Activated CD4-positive, alpha-beta memory T cell treated with anti-CD3 and anti-CD28 coated beads for 36 hours (primary cell): ENCODE measurements at regions of chr11 and their contacts with region 1.

Region 1: GRCh38 chr11:95790123-95790932 is at the start of gene CEP57:
- DNase-seq: peak; percentile 97
- H3K4me3 Mint-ChIP-seq: peak within 1 kb of the TSS; percentile 95
- H3K27ac Mint-ChIP-seq: peak within 1 kb of the TSS; percentile 100
- H3K4me1 Mint-ChIP-seq: peaks cover 55% of the 10 kb centered on the region
- H3K27me3 Mint-ChIP-seq: no peaks in the 10 kb centered on the region
- total RNA-seq, gene CEP57: 115 to 117 TPM

Region 2: DNA sequence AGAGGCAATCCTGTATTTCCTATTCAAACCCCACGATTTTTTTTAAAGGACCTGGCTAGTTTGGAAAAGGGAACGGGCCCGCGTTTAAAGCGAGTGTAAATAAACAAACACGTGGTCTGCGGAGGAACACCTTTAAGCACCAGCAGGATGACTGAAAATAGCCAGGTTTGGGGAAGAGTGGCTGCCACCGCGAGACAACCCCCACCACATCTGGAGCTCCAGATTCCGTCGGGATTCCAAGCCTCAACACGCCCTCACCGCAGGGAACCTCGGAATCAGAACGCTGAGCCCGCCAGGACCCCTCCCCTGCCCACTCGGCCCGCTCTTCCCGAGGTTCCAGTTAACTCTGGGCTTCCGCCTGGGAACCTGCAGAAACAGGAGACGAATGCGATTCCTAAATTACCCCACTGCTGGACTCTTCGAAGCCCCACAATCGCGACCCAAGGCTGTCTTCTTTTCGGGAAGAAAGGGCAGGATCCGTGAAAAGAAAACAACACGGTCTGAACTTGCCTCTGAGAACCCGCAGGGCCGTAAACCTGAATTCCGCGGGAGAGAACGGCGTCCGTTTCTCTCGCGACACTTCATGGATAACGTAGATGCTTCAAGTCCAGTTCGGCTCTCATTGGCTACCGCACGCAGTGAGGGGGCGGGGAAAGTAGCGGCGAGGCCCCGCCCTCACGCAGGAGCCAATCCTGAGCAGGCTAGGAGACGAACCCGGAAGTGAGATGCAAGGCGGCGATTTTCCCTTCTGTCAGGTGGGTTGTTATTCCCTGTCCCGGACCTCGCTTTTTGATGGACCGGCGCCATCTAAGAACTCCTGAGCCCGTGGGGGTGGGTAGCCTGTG is 1296.8 kb before region 1 on chr11 and contains the starts of genes ANKRD49 and MRE11:
- CTCF ChIA-PET with region 1: no interaction called
- POLR2A ChIA-PET with region 1: no interaction called
- intact Hi-C with region 1: loop called (anchors 5 kb)
- DNase-seq: peak; percentile 98
- H3K4me3 Mint-ChIP-seq: peak within 1 kb of the TSS; percentile 96
- H3K27ac Mint-ChIP-seq: peak within 1 kb of the TSS; percentile 89
- H3K4me1 Mint-ChIP-seq: peaks cover 34% of the 10 kb centered on the region
- H3K27me3 Mint-ChIP-seq: no peaks in the 10 kb centered on the region
- total RNA-seq, gene ANKRD49: 18.6 to 19.2 TPM
- total RNA-seq, gene MRE11: 43.4 to 47.6 TPM

Region 3: DNA sequence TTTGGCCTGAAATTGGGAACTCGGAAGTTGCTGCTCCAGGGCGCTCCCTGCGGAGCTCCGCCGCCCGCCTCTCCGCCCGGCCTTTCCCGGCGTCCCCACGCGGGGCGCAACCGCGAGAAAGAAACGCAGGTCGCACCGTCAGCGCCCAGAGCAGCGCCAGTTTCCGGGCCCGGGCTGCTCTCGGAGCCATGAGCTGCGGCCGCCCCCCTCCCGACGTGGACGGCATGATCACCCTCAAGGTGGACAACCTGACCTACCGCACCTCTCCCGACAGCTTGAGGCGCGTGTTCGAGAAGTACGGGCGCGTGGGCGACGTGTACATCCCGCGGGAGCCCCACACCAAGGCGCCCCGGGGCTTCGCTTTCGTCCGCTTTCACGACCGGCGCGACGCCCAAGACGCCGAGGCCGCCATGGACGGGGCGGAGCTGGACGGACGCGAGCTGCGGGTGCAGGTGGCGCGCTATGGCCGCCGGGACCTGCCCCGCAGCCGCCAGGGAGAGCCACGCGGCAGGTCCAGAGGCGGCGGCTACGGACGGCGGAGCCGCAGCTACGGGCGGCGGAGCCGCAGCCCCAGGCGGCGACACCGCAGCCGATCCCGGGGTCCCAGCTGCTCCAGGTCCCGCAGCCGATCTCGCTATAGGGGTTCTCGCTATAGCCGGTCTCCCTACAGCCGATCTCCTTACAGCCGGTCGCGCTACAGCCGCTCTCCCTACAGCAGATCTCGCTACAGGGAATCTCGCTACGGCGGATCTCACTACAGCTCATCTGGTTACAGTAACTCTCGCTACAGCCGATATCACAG is 723.1 kb before region 1 on chr11:
- CTCF ChIA-PET with region 1: interaction called, 5 read pairs
- POLR2A ChIA-PET with region 1: interaction called, 18 read pairs
- intact Hi-C with region 1: loop called (anchors 1 kb)
- DNase-seq: peak; percentile 85
- H3K4me3 Mint-ChIP-seq: peak overlapping the region; percentile 87
- H3K27ac Mint-ChIP-seq: peak overlapping the region; percentile 97
- H3K4me1 Mint-ChIP-seq: peaks cover 24% of the 10 kb centered on the region
- H3K27me3 Mint-ChIP-seq: no peaks in the 10 kb centered on the region

Region 4: GRCh38 chr11:95715777-95716241 is 74.5 kb before region 1 on chr11:
- CTCF ChIA-PET with region 1: no interaction called
- POLR2A ChIA-PET with region 1: no interaction called
- intact Hi-C with region 1: loop called (anchors 2 kb)
- DNase-seq: peak; percentile 71
- H3K4me3 Mint-ChIP-seq: no peak overlapping the region
- H3K27ac Mint-ChIP-seq: peak overlapping the region; percentile 43
- H3K4me1 Mint-ChIP-seq: peaks cover 59% of the 10 kb centered on the region
- H3K27me3 Mint-ChIP-seq: no peaks in the 10 kb centered on the region

Region 5: DNA sequence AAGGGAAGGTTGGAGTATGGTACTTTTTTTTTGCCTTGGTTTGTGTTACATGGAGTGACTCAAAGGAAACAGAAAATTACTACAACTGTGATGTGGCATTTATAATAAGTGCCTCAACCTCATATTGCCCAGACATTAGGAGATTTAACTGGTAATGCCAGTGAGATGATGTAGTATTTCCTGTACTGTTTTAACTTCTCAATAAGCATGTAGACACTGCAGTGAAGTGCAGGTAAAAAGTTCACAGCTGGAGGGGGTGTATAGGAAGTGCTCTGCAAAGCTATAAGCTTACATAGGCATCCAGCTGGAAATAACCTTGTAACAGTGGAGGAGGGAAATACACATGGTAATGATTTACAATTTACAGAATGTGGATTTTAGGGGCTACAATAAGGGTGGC is 271.8 kb after region 1 on chr11:
- CTCF ChIA-PET with region 1: no interaction called
- POLR2A ChIA-PET with region 1: interaction called, 3 read pairs
- intact Hi-C with region 1: loop called (anchors 5 kb)
- DNase-seq: peak; percentile 54
- H3K4me3 Mint-ChIP-seq: peak overlapping the region; percentile 31
- H3K27ac Mint-ChIP-seq: peak overlapping the region; percentile 88
- H3K4me1 Mint-ChIP-seq: peaks cover 75% of the 10 kb centered on the region
- H3K27me3 Mint-ChIP-seq: no peaks in the 10 kb centered on the region

Region 6: DNA sequence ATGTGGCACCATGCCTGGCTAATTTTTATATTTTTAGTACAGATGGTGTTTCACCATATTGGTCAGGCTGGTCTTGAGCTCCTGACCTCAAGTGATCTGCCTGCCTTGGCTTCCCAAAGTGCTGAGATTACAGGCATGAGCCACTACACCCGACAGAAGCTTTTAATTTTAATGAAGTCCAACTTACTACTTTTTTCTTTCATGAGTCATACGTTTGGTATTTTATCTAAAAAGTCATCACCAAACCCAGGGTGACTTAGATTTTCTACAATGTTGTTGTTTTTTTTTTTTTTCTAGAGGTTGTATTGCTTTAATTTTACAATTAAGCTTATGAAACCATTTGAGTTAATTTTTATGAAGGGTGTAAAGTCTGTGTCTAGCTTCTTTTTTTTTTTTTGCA is 634.4 kb after region 1 on chr11:
- CTCF ChIA-PET with region 1: interaction called, 3 read pairs
- POLR2A ChIA-PET with region 1: no interaction called
- intact Hi-C with region 1: loop called (anchors 5 kb)
- DNase-seq: no peak
- H3K4me3 Mint-ChIP-seq: no peak overlapping the region
- H3K27ac Mint-ChIP-seq: no peak overlapping the region
- H3K4me1 Mint-ChIP-seq: peaks cover 8% of the 10 kb centered on the region
- H3K27me3 Mint-ChIP-seq: peaks cover 26% of the 10 kb centered on the region